Spleen (tissue), 13 donors: ENCODE measurements at regions of chr1 and their contacts with region 1.

Region 1: GRCh38 chr1:212455803-212456528 is 23.2 kb downstream of the NENF start:
- DNase-seq: peak; percentile 94
- H3K4me3 ChIP-seq: no peak overlapping the region
- H3K27ac ChIP-seq: no peak overlapping the region
- H3K4me1 ChIP-seq: peaks cover 0 to 28% (median 8%) of the 10 kb centered on the region in 6 donors
- H3K27me3 ChIP-seq: no peaks in the 10 kb centered on the region
- CTCF ChIP-seq: peak; percentile 62 to 97 (median 93)
- POLR2A ChIP-seq: no peak

Region 2: GRCh38 chr1:212070720-212071302 is 385.2 kb before region 1 on chr1:
- intact Hi-C with region 1: loop called (anchors 5 kb)
- DNase-seq: no peak
- H3K4me3 ChIP-seq: peak overlapping the region in 2 of 8 donors; percentile 9 to 32
- H3K27ac ChIP-seq: no peak overlapping the region
- H3K4me1 ChIP-seq: peaks cover 0 to 16% (median 0%) of the 10 kb centered on the region in 6 donors
- H3K27me3 ChIP-seq: no peaks in the 10 kb centered on the region
- CTCF ChIP-seq: peak; percentile 53 to 85 (median 76)
- POLR2A ChIP-seq: no peak

Region 3: GRCh38 chr1:212315907-212316306 is 140.1 kb before region 1 on chr1:
- intact Hi-C with region 1: loop called (anchors 10 kb)
- DNase-seq: no peak
- H3K4me3 ChIP-seq: no peak overlapping the region
- H3K27ac ChIP-seq: peak overlapping the region in 2 of 8 donors; percentile 18 to 28
- H3K4me1 ChIP-seq: peaks cover 8 to 68% (median 33%) of the 10 kb centered on the region in 6 donors
- H3K27me3 ChIP-seq: no peaks in the 10 kb centered on the region
- CTCF ChIP-seq: peak in 1 of 11 experiments; percentile 6
- POLR2A ChIP-seq: no peak

Region 4: GRCh38 chr1:212346601-212347000 is 109.4 kb before region 1 on chr1:
- intact Hi-C with region 1: no loop called
- DNase-seq: no peak
- H3K4me3 ChIP-seq: no peak overlapping the region
- H3K27ac ChIP-seq: no peak overlapping the region
- H3K4me1 ChIP-seq: peaks cover 0 to 13% (median 0%) of the 10 kb centered on the region in 6 donors
- H3K27me3 ChIP-seq: no peaks in the 10 kb centered on the region
- CTCF ChIP-seq: no peak
- POLR2A ChIP-seq: no peak